Ascending aorta (tissue), 2 donors: ENCODE measurements at regions of chr2 and their contacts with region 1.

Region 1: GRCh38 chr2:216698895-216699294 is 3.5 kb upstream of the IGFBP5 start:
- DNase-seq: no peak
- H3K4me3 ChIP-seq: no peak overlapping the region
- H3K27ac ChIP-seq: peak overlapping the region; percentile 65 to 93
- H3K4me1 ChIP-seq: peaks cover 3 to 37% of the 10 kb centered on the region in 2 donors
- H3K27me3 ChIP-seq: no peaks in the 10 kb centered on the region
- CTCF ChIP-seq: peak; percentile 60 to 75 (median 70)

Region 2: GRCh38 chr2:216775043-216775453 is 76.2 kb after region 1 on chr2:
- intact Hi-C with region 1: loop called (anchors 2 kb)
- DNase-seq: peak; percentile 65 to 93
- H3K4me3 ChIP-seq: no peak overlapping the region
- H3K27ac ChIP-seq: peak overlapping the region; percentile 67 to 85
- H3K4me1 ChIP-seq: peaks cover 3 to 17% of the 10 kb centered on the region in 2 donors
- H3K27me3 ChIP-seq: no peaks in the 10 kb centered on the region
- CTCF ChIP-seq: peak; percentile 19 to 23 (median 22)

Region 3: GRCh38 chr2:217166241-217166850 is 467.5 kb after region 1 on chr2:
- intact Hi-C with region 1: loop called (anchors 1 kb)
- DNase-seq: no peak
- H3K4me3 ChIP-seq: no peak overlapping the region
- H3K27ac ChIP-seq: no peak overlapping the region
- H3K4me1 ChIP-seq: peaks cover 0 to 10% of the 10 kb centered on the region in 2 donors
- H3K27me3 ChIP-seq: no peaks in the 10 kb centered on the region
- CTCF ChIP-seq: peak; percentile 44 to 64 (median 53)

Region 4: GRCh38 chr2:217277646-217278398 is 578.9 kb after region 1 on chr2:
- intact Hi-C with region 1: loop called (anchors 5 kb)
- DNase-seq: peak in 1 of 2 donors; percentile 68
- H3K4me3 ChIP-seq: no peak overlapping the region
- H3K27ac ChIP-seq: peak overlapping the region in 1 of 2 donors; percentile 64
- H3K4me1 ChIP-seq: peaks cover 0 to 11% of the 10 kb centered on the region in 2 donors
- H3K27me3 ChIP-seq: no peaks in the 10 kb centered on the region
- CTCF ChIP-seq: no peak

Region 5: DNA sequence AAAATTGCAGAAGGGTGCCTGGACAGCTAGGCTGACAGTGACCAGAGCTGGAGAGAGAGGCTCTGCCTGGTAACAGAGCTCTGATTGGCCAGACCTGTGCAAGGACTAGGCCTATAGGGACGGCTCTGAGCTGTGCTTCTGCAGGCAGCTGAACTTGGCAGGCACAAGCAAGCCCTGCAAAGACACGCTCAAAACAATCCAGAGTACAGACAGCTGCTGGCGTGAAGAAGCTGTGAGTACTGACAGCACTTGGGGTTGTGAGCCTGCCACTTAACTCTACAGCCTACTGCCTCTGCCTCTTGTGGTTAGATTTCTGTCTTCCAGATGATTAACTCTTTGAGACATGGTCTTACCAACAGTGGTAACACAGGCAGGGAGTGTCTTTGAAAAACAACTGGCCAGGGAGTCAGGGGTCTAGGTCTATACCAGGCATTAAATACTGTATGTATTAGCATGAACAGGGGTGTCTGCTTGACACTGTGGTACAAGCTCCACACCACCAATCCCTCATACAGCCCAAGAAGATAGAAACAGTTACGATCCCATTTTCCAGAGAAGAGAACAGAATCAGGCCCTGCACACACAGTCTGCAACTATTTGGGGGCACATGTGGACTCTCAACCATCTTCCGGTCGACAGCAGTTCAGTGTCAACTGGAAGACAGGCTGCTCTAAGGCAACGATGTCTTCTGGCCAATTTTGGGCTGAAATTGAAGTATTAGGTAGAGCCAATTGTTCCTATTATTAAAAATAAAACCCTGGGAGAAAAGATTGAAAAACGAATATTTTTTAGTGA is 735.5 kb after region 1 on chr2:
- intact Hi-C with region 1: loop called (anchors 10 kb)
- DNase-seq: peak; percentile 62 to 90
- H3K4me3 ChIP-seq: peak overlapping the region; percentile 28 to 32
- H3K27ac ChIP-seq: no peak overlapping the region
- H3K4me1 ChIP-seq: peaks cover 7 to 47% of the 10 kb centered on the region in 2 donors
- H3K27me3 ChIP-seq: no peaks in the 10 kb centered on the region
- CTCF ChIP-seq: no peak

Region 6: GRCh38 chr2:217713395-217714286 is 1014.7 kb after region 1 on chr2:
- intact Hi-C with region 1: loop called (anchors 2 kb)
- DNase-seq: peak in 1 of 2 donors; percentile 90
- H3K4me3 ChIP-seq: no peak overlapping the region
- H3K27ac ChIP-seq: peak overlapping the region; percentile 60 to 69
- H3K4me1 ChIP-seq: peaks cover 0 to 15% of the 10 kb centered on the region in 2 donors
- H3K27me3 ChIP-seq: no peaks in the 10 kb centered on the region
- CTCF ChIP-seq: peak; percentile 92 to 95 (median 92)